ENCODE measurements at regions of chr9 and their contacts with region 1.

Region 1: DNA sequence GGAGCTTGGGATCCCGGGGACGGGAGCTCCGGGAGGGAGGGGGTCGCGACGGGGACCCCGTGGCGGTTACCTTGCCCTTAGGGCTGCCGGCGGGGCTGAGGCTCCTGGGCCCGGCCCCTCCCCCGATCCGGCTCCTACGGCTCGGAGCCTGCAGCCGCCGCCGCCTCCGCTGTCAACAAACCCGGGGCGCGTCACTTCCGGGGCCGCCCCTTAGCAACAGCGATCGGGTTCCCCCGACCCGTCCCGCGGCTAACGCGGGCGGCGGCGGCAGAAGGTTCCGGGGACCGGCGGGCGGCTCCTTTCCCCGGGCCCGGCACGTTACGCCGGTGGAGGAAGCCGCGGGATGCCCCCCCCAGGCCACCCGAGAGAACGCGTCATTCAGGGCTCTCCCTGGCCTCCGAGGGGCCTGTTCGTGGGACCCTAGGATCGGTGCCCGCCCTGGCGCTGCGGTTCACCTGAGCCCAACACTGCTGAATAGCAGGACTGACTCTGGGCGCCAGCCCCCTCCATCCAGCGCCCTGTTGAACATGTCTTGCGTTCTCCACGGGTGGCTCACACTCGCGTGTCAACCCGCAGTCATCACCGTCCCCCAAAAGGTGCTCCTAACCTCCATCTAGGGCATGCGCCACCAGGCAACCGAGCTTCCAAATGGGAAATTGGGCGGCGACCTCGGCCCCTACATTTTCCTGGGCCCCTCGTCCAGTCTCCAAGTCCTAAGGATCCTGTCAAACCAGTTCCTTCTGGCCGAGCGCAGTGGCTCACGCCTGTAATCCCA is at the start of gene ZER1:
- DNase-seq: peak; percentile 95
- H3K4me3 Mint-ChIP-seq: peak within 1 kb of the TSS; percentile 95
- H3K27ac Mint-ChIP-seq: peak within 1 kb of the TSS; percentile 90
- H3K4me1 Mint-ChIP-seq: peaks cover 24% of the 10 kb centered on the region
- H3K27me3 Mint-ChIP-seq: no peaks in the 10 kb centered on the region
- total RNA-seq, gene ZER1: 9.9 to 11.0 TPM

Region 2: DNA sequence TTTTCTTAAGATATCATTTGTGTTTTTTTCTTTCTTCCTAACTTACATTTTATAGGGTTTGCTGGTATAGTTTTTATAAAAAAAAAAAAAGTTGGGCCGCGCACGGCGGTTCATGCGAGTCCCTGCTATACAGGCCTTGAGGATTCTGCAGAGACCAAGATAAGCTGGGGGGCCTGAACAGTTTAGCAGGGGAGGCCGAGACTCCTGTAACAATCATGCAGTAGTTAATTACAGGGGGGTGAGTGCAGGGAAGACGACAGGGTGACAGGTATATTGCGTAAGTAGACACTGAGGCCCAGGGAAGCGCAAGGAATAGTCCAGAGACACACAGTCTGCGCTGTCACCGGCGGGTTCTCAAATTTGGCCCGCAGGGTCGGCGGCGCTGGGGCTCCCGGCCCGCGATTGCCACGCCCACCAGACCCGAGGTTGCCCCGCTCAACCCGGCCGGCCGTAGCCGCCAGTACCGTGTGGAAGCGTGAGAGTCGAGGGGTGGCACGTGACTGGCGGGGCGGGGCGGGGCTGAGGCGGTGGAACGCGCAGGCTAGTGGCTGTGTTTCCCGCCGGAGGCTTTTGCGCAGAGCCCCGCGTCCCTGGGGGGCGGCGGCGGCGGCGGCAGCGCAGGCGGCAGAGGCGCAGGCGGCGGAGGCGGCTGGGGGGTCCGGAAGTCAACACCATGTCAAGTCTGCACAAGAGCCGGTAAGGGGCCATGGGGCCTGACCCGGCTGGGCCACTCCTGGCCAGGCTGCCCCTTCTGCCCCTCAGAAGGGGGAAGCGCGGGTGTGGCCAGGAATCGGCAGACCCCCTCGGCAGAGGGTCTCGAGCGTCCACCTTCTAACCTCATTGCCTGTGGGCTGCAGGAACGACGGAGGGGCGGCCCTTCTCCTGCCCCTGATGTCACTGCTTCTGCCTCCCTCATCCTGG is 15.0 kb after region 1 on chr9 and contains the start of gene TBC1D13:
- CTCF ChIA-PET with region 1: interaction called, 4 read pairs
- intact Hi-C with region 1: loop called (anchors 1 kb)
- DNase-seq: peak; percentile 91
- H3K4me3 Mint-ChIP-seq: peak within 1 kb of the TSS; percentile 90
- H3K27ac Mint-ChIP-seq: peak within 1 kb of the TSS; percentile 81
- H3K4me1 Mint-ChIP-seq: peaks cover 26% of the 10 kb centered on the region
- H3K27me3 Mint-ChIP-seq: no peaks in the 10 kb centered on the region
- total RNA-seq, gene TBC1D13: 8.3 to 9.0 TPM

Measured in activated naive CD4-positive, alpha-beta T cell treated with anti-CD3 and anti-CD28 coated beads for 36 hours (primary cell).